Posterior vena cava (tissue), 2 donors: ENCODE measurements at regions of chr2 and their contacts with region 1.

Region 1: DNA sequence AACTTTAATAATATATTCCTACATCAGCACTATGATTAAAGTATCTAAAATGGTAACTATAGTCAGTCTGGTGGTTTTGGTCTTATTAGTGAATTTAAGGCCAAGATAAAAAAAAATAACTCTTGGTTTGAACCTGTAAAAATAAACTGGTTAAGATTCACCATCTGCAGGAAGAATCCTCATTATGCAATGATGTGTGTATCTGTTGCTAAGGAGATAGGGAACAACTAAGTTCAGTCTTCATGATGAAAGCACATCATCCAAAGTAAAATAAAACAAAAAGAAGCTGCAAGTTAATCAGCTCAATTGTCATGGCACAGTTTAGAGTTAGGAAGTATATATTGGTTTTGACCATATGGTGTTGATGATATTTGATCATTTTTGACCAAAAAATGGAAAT is 466.0 kb downstream of the NYAP2 start:
- DNase-seq: no peak

Region 2: DNA sequence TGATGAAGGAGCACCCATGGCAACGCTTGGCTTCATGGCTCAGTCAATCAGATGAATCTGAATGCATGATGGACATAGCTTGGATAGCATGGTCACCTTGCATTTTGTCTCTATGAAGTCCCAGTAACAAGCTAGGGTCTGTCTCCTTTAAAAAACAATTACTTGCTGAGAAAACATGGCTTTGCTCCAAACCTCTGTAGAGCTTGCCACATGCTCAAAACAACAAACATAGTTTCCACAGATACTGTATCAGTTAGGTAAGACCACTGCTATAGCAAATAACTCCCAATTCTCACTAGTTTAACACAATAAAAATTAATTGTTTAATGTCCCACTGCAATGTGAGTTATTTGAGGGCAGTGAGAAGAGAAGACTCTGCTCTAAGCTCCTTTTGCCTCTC is 533.1 kb after region 1 on chr2:
- intact Hi-C with region 1: loop called in 1 of 2 experiments (anchors 5 kb)
- DNase-seq: no peak